ENCODE measurements at regions of chr6 and their contacts with region 1.

Region 1: DNA sequence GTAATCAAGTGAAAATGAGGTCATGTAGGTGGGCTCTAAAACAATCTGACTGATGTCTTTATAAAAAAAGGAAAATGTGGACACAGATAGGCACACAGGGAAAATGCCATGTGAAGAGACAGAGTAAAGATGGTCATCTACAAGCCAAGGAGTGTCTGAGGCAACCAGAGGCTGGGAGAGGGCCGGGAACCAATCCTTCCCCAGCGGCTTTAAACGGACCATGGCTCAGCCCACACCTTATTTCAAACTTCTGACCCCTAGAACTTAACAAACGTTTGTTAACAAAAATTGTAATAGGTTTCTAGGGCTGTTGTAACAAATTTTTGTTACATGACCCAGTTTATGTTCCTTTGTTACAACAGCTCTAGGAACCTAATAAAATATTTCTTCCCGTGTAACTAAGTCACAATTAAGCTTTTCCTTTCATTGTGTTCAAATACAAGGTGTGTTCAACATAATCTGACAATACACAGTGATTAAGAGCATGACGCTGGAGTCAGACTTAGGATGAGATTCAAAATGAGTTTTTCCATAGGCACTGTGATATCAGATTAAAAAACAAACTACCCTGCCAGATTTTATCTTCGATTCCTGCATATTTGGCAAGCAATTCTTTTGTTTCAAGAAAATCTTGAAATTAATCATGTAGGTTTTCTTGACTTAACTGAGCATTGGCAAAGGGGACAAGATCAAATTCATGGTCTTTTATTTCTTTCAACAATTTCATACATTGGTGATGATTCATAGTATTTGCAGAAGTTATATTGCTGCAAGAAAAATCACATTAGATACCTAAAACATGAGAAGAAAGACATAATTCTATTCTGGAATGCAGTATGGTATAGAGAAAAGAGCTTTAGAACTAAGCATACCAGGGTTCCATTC is 169.5 kb upstream of the RIPOR2 start:
- DNase-seq: peak; percentile 56
- H3K4me3 ChIP-seq: no peak overlapping the region
- H3K27ac ChIP-seq: no peak overlapping the region
- H3K4me1 ChIP-seq: no peaks in the 10 kb centered on the region
- H3K27me3 ChIP-seq: no peaks in the 10 kb centered on the region
- CTCF ChIP-seq: no peak
- POLR2A ChIP-seq: no peak

Region 2: GRCh38 chr6:25122001-25122400 is 16.7 kb after region 1 on chr6:
- CTCF ChIA-PET with region 1: interaction called, 3 read pairs
- POLR2A ChIA-PET with region 1: no interaction called
- dilution Hi-C with region 1: no loop called
- intact Hi-C with region 1: loop called (anchors 1 kb)
- DNase-seq: peak; percentile 84
- H3K4me3 ChIP-seq: no peak overlapping the region
- H3K27ac ChIP-seq: no peak overlapping the region
- H3K4me1 ChIP-seq: peaks cover 12% of the 10 kb centered on the region
- H3K27me3 ChIP-seq: no peaks in the 10 kb centered on the region
- CTCF ChIP-seq: no peak
- POLR2A ChIP-seq: no peak

Region 3: DNA sequence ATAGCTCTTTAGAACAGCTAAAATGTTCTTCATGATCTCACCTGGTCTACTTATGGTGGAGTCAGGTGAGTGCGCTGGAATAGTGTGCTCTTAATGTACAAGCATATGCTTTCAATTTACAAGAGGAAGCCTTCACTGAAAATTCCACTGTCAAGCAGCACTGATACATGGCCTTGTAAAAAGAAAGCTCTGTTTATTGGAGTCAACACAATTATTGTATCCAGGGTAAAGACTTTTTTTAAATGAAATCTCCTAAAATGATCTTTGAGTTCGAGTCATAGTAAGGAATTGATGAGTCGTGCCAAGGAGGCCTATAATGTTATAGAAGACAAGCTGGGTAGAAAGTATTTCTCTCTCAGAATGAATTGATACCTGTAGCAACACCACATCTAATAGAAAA is 132.3 kb after region 1 on chr6:
- CTCF ChIA-PET with region 1: no interaction called
- POLR2A ChIA-PET with region 1: no interaction called
- dilution Hi-C with region 1: no loop called
- intact Hi-C with region 1: no loop called
- DNase-seq: no peak
- H3K4me3 ChIP-seq: no peak overlapping the region
- H3K27ac ChIP-seq: no peak overlapping the region
- H3K4me1 ChIP-seq: no peaks in the 10 kb centered on the region
- H3K27me3 ChIP-seq: no peaks in the 10 kb centered on the region
- CTCF ChIP-seq: no peak
- POLR2A ChIP-seq: no peak